ENCODE measurements at regions of chr3 and their contacts with region 1.

Region 1: DNA sequence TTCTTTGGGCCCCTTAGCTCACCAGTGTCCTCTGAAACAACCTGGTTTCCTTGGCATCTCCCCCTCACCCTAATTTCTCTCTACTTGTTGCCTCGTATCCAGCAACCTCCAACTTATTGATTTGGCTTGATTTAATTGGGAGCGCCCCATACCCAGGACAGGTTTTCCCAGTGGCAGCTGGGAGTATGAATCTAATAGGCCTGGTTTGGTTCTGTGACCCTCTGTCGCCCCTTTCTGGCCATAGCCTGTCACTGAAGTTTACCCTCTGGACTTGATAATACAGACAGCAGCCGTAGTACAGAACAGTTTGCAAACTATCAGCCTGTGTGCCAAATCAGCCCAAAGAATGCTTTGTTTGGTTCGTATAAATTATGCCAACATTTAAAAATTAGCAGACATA is 525.1 kb upstream of the GOLIM4 start:
- DNase-seq: peak; percentile 58 to 66 (median 61)
- H3K4me3 ChIP-seq: no peak overlapping the region
- H3K27ac ChIP-seq: no peak overlapping the region
- H3K4me1 ChIP-seq: peaks cover 11 to 43% (median 22%) of the 10 kb centered on the region in 4 experiments
- H3K27me3 ChIP-seq: no peaks in the 10 kb centered on the region

Region 2: DNA sequence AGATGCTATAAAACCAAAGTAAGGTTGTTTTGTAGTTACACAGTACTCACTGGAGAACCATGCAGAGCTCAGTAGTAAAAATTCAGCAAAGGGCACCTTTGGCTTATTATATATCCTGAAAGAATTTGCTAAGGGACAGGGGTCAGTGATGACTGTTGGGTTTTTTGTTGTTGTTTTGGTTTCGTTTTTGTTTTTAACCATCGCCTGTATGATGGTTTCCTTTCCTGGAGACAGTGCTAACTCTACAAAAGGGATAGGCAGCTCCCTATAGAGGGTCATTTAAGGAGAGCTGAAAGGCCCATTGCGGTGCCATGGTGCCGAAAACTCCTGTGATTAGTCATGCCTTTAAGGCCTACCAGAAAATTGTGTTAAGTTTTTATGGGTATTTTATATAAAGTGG is 406.9 kb before region 1 on chr3:
- CTCF ChIA-PET with region 1: interaction called, 13 read pairs
- POLR2A ChIA-PET with region 1: interaction called, 5 read pairs
- DNase-seq: peak; percentile 25 to 64 (median 56)
- H3K4me3 ChIP-seq: peak overlapping the region in 2 of 7 experiments; percentile 61 to 66
- H3K27ac ChIP-seq: no peak overlapping the region
- H3K4me1 ChIP-seq: peaks cover 0 to 13% (median 0%) of the 10 kb centered on the region in 4 experiments
- H3K27me3 ChIP-seq: no peaks in the 10 kb centered on the region

Region 3: GRCh38 chr3:168511428-168512014 is 109.3 kb before region 1 on chr3:
- CTCF ChIA-PET with region 1: interaction called, 31 read pairs
- POLR2A ChIA-PET with region 1: no interaction called
- DNase-seq: peak; percentile 44 to 62 (median 58)
- H3K4me3 ChIP-seq: peak overlapping the region in 1 of 7 experiments; percentile 12
- H3K27ac ChIP-seq: no peak overlapping the region
- H3K4me1 ChIP-seq: peaks cover 0 to 11% (median 2%) of the 10 kb centered on the region in 4 experiments
- H3K27me3 ChIP-seq: no peaks in the 10 kb centered on the region

Region 4: GRCh38 chr3:168644967-168645579 is 24.2 kb after region 1 on chr3:
- CTCF ChIA-PET with region 1: no interaction called
- POLR2A ChIA-PET with region 1: no interaction called
- DNase-seq: peak in 1 of 3 donors; percentile 35
- H3K4me3 ChIP-seq: no peak overlapping the region
- H3K27ac ChIP-seq: no peak overlapping the region
- H3K4me1 ChIP-seq: no peaks in the 10 kb centered on the region
- H3K27me3 ChIP-seq: no peaks in the 10 kb centered on the region

Region 5: GRCh38 chr3:168722091-168722490 is 101.3 kb after region 1 on chr3:
- CTCF ChIA-PET with region 1: no interaction called
- POLR2A ChIA-PET with region 1: no interaction called
- DNase-seq: no peak
- H3K4me3 ChIP-seq: no peak overlapping the region
- H3K27ac ChIP-seq: no peak overlapping the region
- H3K4me1 ChIP-seq: no peaks in the 10 kb centered on the region
- H3K27me3 ChIP-seq: no peaks in the 10 kb centered on the region